OCI-LY7 (cell line): ENCODE measurements at regions of chr11 and their contacts with region 1.

Region 1: DNA sequence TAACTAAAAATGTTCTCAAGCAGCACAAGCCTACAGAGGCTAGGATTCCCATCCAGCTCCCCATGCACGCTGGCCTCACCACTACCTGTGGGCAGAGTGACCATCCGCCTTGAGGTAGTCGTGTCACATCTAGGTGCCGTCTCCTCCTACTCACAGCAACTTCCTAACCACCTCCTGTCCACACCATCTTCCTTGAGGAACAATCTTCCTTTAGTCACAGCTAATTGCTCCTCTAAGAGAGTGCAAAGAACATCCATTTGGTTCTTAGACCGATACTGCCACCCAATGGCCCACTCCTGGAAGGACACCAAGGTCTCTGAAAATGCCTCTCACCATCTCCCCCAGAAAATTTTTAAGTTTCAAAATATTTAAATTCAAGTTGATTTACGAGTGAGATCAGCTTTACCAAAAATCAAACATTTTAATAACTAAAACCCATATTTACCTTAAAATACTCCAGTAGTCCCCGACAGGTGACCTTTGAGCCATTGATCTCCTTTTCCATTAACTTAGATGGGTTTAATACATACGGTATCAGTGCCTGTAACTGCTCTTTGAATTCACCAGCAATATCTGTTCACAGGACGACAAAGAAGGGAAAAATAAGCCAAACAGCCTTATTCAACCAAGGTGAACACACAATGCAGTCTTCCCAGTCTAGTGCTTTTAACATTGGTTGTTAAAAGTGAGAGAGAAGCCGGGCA is 21.7 kb upstream of the PLAAT3 start:
- DNase-seq: peak; percentile 62
- H3K4me3 ChIP-seq: no peak overlapping the region
- H3K27ac ChIP-seq: no peak overlapping the region
- H3K4me1 ChIP-seq: no peaks in the 10 kb centered on the region
- CTCF ChIP-seq: peak; percentile 91

Region 2: GRCh38 chr11:63478896-63479295 is 157.0 kb before region 1 on chr11:
- CTCF ChIA-PET with region 1: interaction called, 3 read pairs
- POLR2A ChIA-PET with region 1: no interaction called
- intact Hi-C with region 1: loop called (anchors 1 kb)
- DNase-seq: peak; percentile 71
- H3K4me3 ChIP-seq: no peak overlapping the region
- H3K27ac ChIP-seq: no peak overlapping the region
- H3K4me1 ChIP-seq: no peaks in the 10 kb centered on the region
- CTCF ChIP-seq: peak; percentile 99

Region 3: GRCh38 chr11:64216879-64217278 is 581.0 kb after region 1 on chr11:
- CTCF ChIA-PET with region 1: no interaction called
- POLR2A ChIA-PET with region 1: no interaction called
- intact Hi-C with region 1: no loop called
- DNase-seq: no peak
- H3K4me3 ChIP-seq: no peak overlapping the region
- H3K27ac ChIP-seq: no peak overlapping the region
- H3K4me1 ChIP-seq: peaks cover 4% of the 10 kb centered on the region
- CTCF ChIP-seq: peak; percentile 36; the same call in 1 of the 2 replicates